ENCODE measurements at regions of chr12 and their contacts with region 1.

Region 1: GRCh38 chr12:120116792-120117651 is 469 bp upstream of the RAB35 start:
- DNase-seq: peak; percentile 85 to 99
- H3K4me3 ChIP-seq: peak overlapping the region; percentile 63 to 93 (median 89)
- H3K27ac ChIP-seq: no peak overlapping the region; the same call in 1 of the 2 replicates
- H3K4me1 ChIP-seq: peaks cover 5 to 14% (median 9%) of the 10 kb centered on the region in 4 experiments; a peak in 6 of 7 replicates
- H3K27me3 ChIP-seq: no peaks in the 10 kb centered on the region
- CTCF ChIP-seq: no peak
- EP300 ChIP-seq: no peak
- POLR2A ChIP-seq: peak in 1 of 2 experiments; percentile 57; a peak in 2 of 3 replicates
- RAD21 ChIP-seq: no peak

Region 2: GRCh38 chr12:120086801-120087621 is 30.0 kb before region 1 on chr12:
- CTCF ChIA-PET with region 1: interaction called, 12 read pairs
- POLR2A ChIA-PET with region 1: interaction called, 96 read pairs
- DNase-seq: peak; percentile 100
- H3K4me3 ChIP-seq: peak overlapping the region; percentile 17 to 57 (median 38); a peak in 7 of 8 replicates
- H3K27ac ChIP-seq: peak overlapping the region; percentile 59
- H3K4me1 ChIP-seq: peaks cover 9 to 21% (median 12%) of the 10 kb centered on the region in 4 experiments
- H3K27me3 ChIP-seq: no peaks in the 10 kb centered on the region
- CTCF ChIP-seq: peak; percentile 90 to 96 (median 92)
- EP300 ChIP-seq: peak in 1 of 2 experiments; percentile 97; a peak in 2 of 3 replicates
- POLR2A ChIP-seq: peak; percentile 52 to 79
- RAD21 ChIP-seq: peak; percentile 62 to 79

Region 3: GRCh38 chr12:120100435-120101029 is 16.5 kb before region 1 on chr12:
- CTCF ChIA-PET with region 1: interaction called, 12 read pairs
- POLR2A ChIA-PET with region 1: interaction called, 96 read pairs
- DNase-seq: no peak
- H3K4me3 ChIP-seq: no peak overlapping the region
- H3K27ac ChIP-seq: no peak overlapping the region
- H3K4me1 ChIP-seq: peaks cover 0 to 14% (median 7%) of the 10 kb centered on the region in 4 experiments; a peak in 5 of 7 replicates
- H3K27me3 ChIP-seq: no peaks in the 10 kb centered on the region
- CTCF ChIP-seq: no peak
- EP300 ChIP-seq: no peak
- POLR2A ChIP-seq: no peak
- RAD21 ChIP-seq: no peak

Region 4: DNA sequence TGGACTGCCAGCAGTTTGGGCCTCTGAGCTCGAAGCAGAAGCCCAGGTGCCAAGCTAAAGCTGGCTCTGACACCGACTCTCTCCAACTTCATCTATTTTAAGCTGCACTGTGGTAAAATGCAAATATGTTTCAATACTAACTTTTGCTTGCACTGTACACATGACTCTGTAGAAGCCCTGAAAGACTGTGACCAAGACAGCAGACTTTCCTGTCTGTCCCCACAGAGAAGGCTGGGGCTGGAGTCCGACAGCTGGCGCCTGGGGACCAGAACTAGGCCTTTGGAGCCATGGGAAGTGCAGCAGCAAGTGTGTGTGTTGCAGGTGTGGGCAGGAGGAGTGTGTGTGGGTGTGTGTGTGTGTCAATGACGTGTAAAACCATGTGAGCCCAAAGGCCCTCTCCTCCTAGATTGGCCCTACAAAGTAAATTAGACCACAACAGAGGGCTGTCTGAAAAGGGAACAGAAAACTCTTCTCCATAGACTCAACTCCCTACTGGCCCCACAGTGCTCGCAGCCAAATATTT is 15.9 kb after region 1 on chr12:
- CTCF ChIA-PET with region 1: interaction called, 3 read pairs
- POLR2A ChIA-PET with region 1: interaction called, 58 read pairs
- DNase-seq: no peak
- H3K4me3 ChIP-seq: no peak overlapping the region
- H3K27ac ChIP-seq: no peak overlapping the region
- H3K4me1 ChIP-seq: no peaks in the 10 kb centered on the region
- H3K27me3 ChIP-seq: no peaks in the 10 kb centered on the region; a peak in 1 of 7 replicates
- CTCF ChIP-seq: no peak
- EP300 ChIP-seq: no peak
- POLR2A ChIP-seq: no peak
- RAD21 ChIP-seq: no peak

Measured in H1 (cell line).